Vagina (tissue), 2 donors: ENCODE measurements at regions of chr1 and their contacts with region 1.

Region 1: DNA sequence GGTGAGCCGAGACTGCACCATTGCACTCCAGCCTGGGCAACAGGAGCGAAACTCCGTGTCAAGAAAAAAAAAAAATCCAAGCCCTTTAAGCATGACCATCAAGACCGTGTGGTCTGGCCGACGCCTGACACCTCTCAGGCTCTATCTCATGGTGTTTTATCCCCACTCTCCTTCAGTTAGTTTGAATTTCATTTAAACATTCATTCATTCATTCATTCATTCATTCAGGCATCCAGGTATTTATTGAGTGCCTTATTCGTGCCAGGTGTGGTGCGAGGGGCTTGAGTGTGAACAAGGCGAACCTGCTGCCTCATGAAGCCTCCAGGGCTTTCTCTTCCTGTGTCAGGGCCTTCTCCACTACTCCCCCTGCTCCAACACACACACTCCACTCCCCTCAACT is 22.6 kb upstream of the OPRD1 start:
- DNase-seq: no peak
- H3K4me3 ChIP-seq: no peak overlapping the region
- H3K27ac ChIP-seq: no peak overlapping the region
- H3K4me1 ChIP-seq: no peaks in the 10 kb centered on the region
- H3K27me3 ChIP-seq: no peaks in the 10 kb centered on the region
- CTCF ChIP-seq: no peak
- POLR2A ChIP-seq: no peak

Region 2: GRCh38 chr1:28871631-28872401 is 82.4 kb after region 1 on chr1:
- intact Hi-C with region 1: loop called (anchors 5 kb)
- DNase-seq: no peak
- H3K4me3 ChIP-seq: no peak overlapping the region
- H3K27ac ChIP-seq: no peak overlapping the region
- H3K4me1 ChIP-seq: no peaks in the 10 kb centered on the region
- H3K27me3 ChIP-seq: no peaks in the 10 kb centered on the region
- CTCF ChIP-seq: no peak
- POLR2A ChIP-seq: no peak